WTC11 (cell line): ENCODE measurements at regions of chr11 and their contacts with region 1.

Region 1: DNA sequence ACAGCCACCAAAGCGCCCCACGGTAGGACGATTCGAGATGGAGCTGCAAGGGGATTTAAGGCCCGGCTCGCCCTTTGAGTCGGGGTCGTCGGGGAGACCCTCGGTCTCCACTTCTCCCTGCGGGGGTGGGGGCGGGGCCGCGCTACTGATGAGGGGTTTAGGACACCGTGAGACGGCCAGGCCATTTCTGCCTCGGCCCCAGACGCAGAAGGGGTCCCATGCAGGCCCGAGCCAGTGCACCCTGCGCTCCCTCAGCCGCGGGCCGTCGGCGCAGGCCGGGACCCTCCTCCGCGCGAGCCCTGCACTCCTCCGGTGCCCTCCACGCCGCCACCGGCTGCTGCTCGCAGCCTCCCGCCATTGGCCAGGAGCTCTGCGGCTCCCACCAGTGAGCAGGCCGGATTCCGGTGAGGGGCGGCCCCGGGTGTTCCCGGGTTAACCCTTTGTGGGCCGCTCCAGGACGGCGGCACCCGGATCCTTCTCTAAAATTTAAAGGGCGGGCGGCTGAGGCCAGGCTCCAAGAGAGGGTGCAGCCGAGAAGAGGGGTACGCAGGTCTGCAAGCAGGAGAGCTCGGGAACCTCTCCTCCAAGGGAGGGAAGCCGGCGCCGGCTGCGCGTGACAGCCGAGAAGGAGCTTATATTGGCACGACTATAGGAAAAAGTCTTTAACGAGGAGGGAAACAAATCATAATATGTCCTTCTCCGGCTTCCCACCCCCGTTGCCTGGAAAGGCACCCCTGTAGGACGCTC is 18.0 kb downstream of the CREB3L1 start:
- DNase-seq: peak; percentile 90
- ATAC-seq: peak; percentile 68
- H3K4me3 Mint-ChIP-seq: peak overlapping the region; percentile 82
- H3K27ac Mint-ChIP-seq: peak overlapping the region; percentile 93
- H3K4me1 Mint-ChIP-seq: peaks cover 50% of the 10 kb centered on the region
- H3K27me3 Mint-ChIP-seq: no peaks in the 10 kb centered on the region
- CTCF ChIP-seq: no peak

Region 2: DNA sequence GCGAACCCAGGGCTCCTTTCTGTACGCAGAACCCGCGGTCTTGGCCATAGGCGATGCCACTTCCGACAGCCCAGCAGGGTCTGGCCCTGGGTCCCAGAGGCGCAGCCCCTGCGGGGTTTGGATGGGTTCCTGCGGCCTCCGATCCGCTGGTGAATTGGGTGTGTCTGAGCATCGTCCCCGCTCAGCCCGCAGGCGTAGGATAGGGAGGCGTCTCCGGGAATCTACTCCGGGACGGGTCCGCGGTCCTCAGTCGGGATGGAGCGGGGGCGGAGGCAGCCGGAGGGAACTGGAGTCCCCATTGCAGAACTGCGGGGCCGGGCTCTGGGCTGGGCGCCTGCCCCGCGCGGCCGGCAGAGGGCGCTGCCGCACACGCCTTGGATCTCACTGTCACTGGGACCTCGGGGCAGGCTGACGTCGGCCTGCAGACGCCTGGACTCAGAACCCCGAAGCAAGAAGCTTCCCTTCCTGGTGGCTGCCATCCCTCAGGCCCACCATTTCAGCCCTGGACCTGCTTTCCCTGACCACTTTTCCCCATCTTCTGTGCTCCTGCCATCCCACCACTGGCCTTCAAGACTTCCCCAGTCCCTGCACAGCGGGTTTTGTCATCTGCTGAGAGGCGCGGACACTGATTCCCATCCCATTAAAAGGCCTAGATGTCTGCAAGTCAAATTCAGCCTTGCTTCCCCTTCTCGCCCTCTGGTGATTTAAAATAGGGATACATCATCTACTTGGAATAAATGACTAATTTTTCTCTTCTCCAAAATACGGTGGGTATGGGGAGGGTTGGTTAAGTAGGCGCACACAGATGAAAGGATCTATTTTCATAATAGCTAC is 56.3 kb before region 1 on chr11:
- CTCF ChIA-PET with region 1: interaction called, 77 read pairs
- POLR2A ChIA-PET with region 1: interaction called, 86 read pairs
- DNase-seq: peak; percentile 96
- ATAC-seq: peak; percentile 80
- H3K4me3 Mint-ChIP-seq: peak overlapping the region; percentile 66
- H3K27ac Mint-ChIP-seq: no peak overlapping the region
- H3K4me1 Mint-ChIP-seq: peaks cover 44% of the 10 kb centered on the region
- H3K27me3 Mint-ChIP-seq: peaks cover 43% of the 10 kb centered on the region
- CTCF ChIP-seq: peak; percentile 97

Region 3: GRCh38 chr11:46272816-46273427 is 22.6 kb before region 1 on chr11:
- CTCF ChIA-PET with region 1: interaction called, 132 read pairs
- POLR2A ChIA-PET with region 1: interaction called, 67 read pairs
- DNase-seq: no peak
- ATAC-seq: no peak
- H3K4me3 Mint-ChIP-seq: no peak overlapping the region
- H3K27ac Mint-ChIP-seq: peak overlapping the region; percentile 1; the same call in 1 of the 2 replicates
- H3K4me1 Mint-ChIP-seq: peaks cover 25% of the 10 kb centered on the region
- H3K27me3 Mint-ChIP-seq: peaks cover 18% of the 10 kb centered on the region
- CTCF ChIP-seq: no peak

Region 4: GRCh38 chr11:46308631-46309419 is 13.3 kb after region 1 on chr11:
- CTCF ChIA-PET with region 1: interaction called, 242 read pairs
- POLR2A ChIA-PET with region 1: interaction called, 13 read pairs
- DNase-seq: peak; percentile 87
- ATAC-seq: peak; percentile 85
- H3K4me3 Mint-ChIP-seq: no peak overlapping the region
- H3K27ac Mint-ChIP-seq: 0 out of 2 replicates have a peak overlapping the region, but pooled peaks have one; percentile 27
- H3K4me1 Mint-ChIP-seq: peaks cover 19% of the 10 kb centered on the region
- H3K27me3 Mint-ChIP-seq: no peaks in the 10 kb centered on the region; the same call in 1 of the 2 replicates
- CTCF ChIP-seq: peak; percentile 85

Region 5: GRCh38 chr11:46322759-46323158 is 27.3 kb after region 1 on chr11:
- CTCF ChIA-PET with region 1: interaction called, 10 read pairs
- POLR2A ChIA-PET with region 1: no interaction called
- DNase-seq: peak; percentile 72
- ATAC-seq: peak; percentile 57
- H3K4me3 Mint-ChIP-seq: no peak overlapping the region
- H3K27ac Mint-ChIP-seq: no peak overlapping the region
- H3K4me1 Mint-ChIP-seq: peaks cover 13% of the 10 kb centered on the region
- H3K27me3 Mint-ChIP-seq: peaks cover 5% of the 10 kb centered on the region; the same call in 1 of the 2 replicates
- CTCF ChIP-seq: peak; percentile 41

Region 6: DNA sequence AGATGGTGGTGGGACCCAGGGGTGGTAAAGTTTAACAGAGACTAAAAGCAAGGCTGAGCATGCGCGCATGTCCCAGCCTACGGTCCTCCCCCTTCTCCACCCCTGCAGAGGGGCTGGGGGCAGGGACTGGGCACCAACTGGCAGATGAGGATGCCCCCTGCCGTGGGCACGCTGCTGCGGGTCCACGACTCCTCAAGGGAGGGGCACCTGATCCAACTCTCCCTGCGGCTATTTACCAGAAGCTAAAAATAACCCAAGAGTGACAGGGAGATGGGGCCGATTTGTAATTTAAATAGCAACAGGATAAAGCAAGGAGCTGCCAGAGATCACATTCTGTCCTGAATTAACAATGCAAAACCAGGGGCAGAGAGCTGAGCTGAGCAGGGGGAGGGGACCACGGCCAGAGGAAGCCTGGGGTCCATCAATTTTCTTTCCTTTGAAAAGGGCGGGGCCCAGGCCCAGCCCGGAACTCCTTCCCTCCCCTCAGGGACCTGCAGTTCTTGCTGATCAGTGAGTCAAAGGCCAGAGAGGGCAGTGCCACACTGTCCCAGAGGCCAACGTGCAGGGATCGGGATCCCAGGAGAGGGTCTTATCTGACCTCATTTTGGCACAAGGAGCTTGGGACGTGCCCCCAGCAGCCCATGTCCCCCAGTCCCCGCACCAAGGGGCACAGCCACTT is 43.6 kb after region 1 on chr11:
- CTCF ChIA-PET with region 1: interaction called, 23 read pairs
- POLR2A ChIA-PET with region 1: interaction called, 9 read pairs
- DNase-seq: peak; percentile 83
- ATAC-seq: peak; percentile 89
- H3K4me3 Mint-ChIP-seq: peak overlapping the region; percentile 60
- H3K27ac Mint-ChIP-seq: peak overlapping the region; percentile 99
- H3K4me1 Mint-ChIP-seq: peaks cover 96% of the 10 kb centered on the region
- H3K27me3 Mint-ChIP-seq: peaks cover 9% of the 10 kb centered on the region
- CTCF ChIP-seq: no peak

Region 7: GRCh38 chr11:46352063-46352841 is 56.8 kb after region 1 on chr11:
- CTCF ChIA-PET with region 1: interaction called, 32 read pairs
- POLR2A ChIA-PET with region 1: interaction called, 13 read pairs
- DNase-seq: peak; percentile 86
- ATAC-seq: peak; percentile 77
- H3K4me3 Mint-ChIP-seq: peak overlapping the region; percentile 30
- H3K27ac Mint-ChIP-seq: peak overlapping the region; percentile 89
- H3K4me1 Mint-ChIP-seq: peaks cover 64% of the 10 kb centered on the region
- H3K27me3 Mint-ChIP-seq: no peaks in the 10 kb centered on the region
- CTCF ChIP-seq: peak; percentile 98